ENCODE measurements at regions of chr18 and their contacts with region 1.

Region 1: DNA sequence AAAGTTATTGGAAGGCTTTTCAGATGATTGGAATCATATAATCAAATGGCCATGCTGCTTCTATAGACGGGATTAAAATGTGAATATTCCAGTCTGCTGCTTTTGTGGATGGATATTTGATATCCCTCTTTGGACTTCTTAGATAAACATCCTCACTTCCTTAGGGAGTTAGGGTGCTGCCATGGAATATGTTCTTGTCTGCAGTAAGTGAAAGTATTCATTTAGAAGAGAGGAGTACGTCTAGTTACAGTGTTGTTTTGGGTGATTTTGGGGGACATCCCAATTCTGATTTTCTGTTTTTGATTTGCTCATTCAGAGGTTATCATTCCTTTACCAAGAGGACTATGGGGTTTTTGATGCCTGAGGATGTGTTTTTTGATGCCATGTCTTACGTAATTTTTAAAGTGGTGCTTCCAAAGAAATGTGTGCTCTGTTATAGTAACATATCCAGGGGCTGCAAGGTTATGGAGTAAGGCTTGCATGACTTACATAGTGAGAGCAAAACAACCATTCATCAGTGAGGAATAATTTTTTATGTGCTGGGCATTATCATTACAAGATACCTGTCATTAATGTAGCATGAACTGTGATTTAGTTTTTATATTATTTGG is 33.6 kb downstream of the ASXL3 start:
- DNase-seq: no peak
- H3K4me3 ChIP-seq: no peak overlapping the region
- H3K27ac ChIP-seq: no peak overlapping the region
- H3K4me1 ChIP-seq: no peaks in the 10 kb centered on the region
- H3K27me3 ChIP-seq: no peaks in the 10 kb centered on the region
- CTCF ChIP-seq: no peak
- POLR2A ChIP-seq: no peak

Region 2: DNA sequence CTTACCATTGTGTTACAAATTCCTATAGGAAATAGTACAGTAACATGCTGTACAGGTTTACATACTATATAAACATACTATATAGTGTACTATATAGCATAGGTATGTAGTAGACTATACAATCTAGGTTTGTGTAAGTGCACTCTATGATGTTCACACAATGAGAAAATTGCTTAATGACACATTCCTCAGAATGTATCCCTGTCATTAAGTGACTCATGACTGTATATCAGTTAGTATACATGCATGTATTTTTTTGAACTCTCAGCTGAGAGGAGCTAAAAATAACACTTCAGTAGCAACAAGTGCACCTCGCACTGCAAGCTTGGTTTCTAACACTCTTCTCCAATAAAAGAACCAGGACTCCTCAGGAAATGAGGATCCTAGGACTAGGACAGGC is 53.1 kb before region 1 on chr18:
- intact Hi-C with region 1: loop called (anchors 10 kb)
- DNase-seq: no peak
- H3K4me3 ChIP-seq: no peak overlapping the region
- H3K27ac ChIP-seq: no peak overlapping the region
- H3K4me1 ChIP-seq: no peaks in the 10 kb centered on the region
- H3K27me3 ChIP-seq: no peaks in the 10 kb centered on the region
- CTCF ChIP-seq: no peak
- POLR2A ChIP-seq: no peak

Region 3: GRCh38 chr18:33644494-33644893 is 32.9 kb after region 1 on chr18:
- intact Hi-C with region 1: no loop called
- DNase-seq: no peak
- H3K4me3 ChIP-seq: no peak overlapping the region
- H3K27ac ChIP-seq: no peak overlapping the region
- H3K4me1 ChIP-seq: no peaks in the 10 kb centered on the region
- H3K27me3 ChIP-seq: no peaks in the 10 kb centered on the region
- CTCF ChIP-seq: no peak
- POLR2A ChIP-seq: no peak

Region 4: GRCh38 chr18:33664241-33664874 is 52.7 kb after region 1 on chr18:
- intact Hi-C with region 1: no loop called
- DNase-seq: no peak
- H3K4me3 ChIP-seq: no peak overlapping the region
- H3K27ac ChIP-seq: no peak overlapping the region
- H3K4me1 ChIP-seq: no peaks in the 10 kb centered on the region
- H3K27me3 ChIP-seq: no peaks in the 10 kb centered on the region
- CTCF ChIP-seq: no peak
- POLR2A ChIP-seq: no peak

Region 5: GRCh38 chr18:33844232-33844631 is 232.6 kb after region 1 on chr18:
- intact Hi-C with region 1: no loop called
- DNase-seq: no peak
- H3K4me3 ChIP-seq: no peak overlapping the region
- H3K27ac ChIP-seq: no peak overlapping the region
- H3K4me1 ChIP-seq: no peaks in the 10 kb centered on the region
- H3K27me3 ChIP-seq: no peaks in the 10 kb centered on the region
- CTCF ChIP-seq: no peak
- POLR2A ChIP-seq: no peak

Region 6: DNA sequence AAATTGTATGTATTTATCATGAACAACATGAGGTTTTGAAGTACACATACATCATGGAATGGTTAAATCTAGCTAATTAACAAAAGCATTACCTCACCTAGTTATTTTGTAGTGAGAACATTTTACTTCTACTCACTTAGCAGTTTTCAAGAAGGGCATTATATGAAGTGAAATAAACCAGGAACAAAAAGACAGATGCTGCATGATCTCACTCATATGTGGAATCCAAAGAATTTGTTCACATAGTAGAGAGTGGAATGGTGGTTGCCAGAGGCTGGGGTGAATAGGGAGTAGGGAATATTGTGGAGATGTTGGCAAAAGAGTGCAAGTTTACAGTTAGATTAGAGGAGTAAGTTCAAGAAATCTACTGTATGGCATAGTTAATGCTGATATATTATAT is 258.4 kb after region 1 on chr18:
- intact Hi-C with region 1: no loop called
- DNase-seq: no peak
- H3K4me3 ChIP-seq: no peak overlapping the region
- H3K27ac ChIP-seq: no peak overlapping the region
- H3K4me1 ChIP-seq: no peaks in the 10 kb centered on the region
- H3K27me3 ChIP-seq: no peaks in the 10 kb centered on the region
- CTCF ChIP-seq: no peak
- POLR2A ChIP-seq: no peak